ENCODE measurements at regions of chr2 and their contacts with region 1.

Region 1: GRCh38 chr2:132276571-132276981 is 114.8 kb upstream of the ANKRD30BL start:
- DNase-seq: no peak
- H3K4me3 ChIP-seq: no peak overlapping the region
- H3K27ac ChIP-seq: no peak overlapping the region
- H3K4me1 ChIP-seq: no peaks in the 10 kb centered on the region
- H3K27me3 ChIP-seq: peaks cover 0 to 3% (median 0%) of the 10 kb centered on the region in 4 donors
- CTCF ChIP-seq: no peak
- POLR2A ChIP-seq: no peak

Region 2: DNA sequence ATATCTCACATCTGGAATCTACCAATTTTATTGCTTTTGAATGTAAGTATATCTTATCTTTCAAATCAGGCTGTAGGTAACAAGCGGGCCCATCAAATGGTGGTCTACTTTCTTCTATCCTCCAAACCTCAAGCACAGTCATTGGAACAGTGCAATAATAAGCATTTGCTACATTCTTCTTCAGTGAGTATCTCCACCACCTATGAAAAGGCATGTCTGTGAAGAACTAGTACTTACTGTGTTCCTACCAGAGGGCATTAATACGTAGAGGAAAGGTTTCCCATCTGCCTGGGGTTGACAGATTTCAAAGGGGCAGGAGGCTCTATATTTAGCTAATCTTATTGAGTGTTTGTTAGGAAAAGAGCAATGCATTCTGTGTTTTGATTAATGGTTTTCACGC is 880.6 kb after region 1 on chr2:
- intact Hi-C with region 1: loop called (anchors 10 kb)
- DNase-seq: no peak
- H3K4me3 ChIP-seq: no peak overlapping the region
- H3K27ac ChIP-seq: no peak overlapping the region
- H3K4me1 ChIP-seq: no peaks in the 10 kb centered on the region
- H3K27me3 ChIP-seq: no peaks in the 10 kb centered on the region
- CTCF ChIP-seq: no peak
- POLR2A ChIP-seq: no peak

Measured in esophagus squamous epithelium (tissue), 5 donors.